Activated naive CD4-positive, alpha-beta T cell treated with anti-CD3 and anti-CD28 coated beads for 36 hours (primary cell): ENCODE measurements at regions of chr3 and their contacts with region 1.

Region 1: DNA sequence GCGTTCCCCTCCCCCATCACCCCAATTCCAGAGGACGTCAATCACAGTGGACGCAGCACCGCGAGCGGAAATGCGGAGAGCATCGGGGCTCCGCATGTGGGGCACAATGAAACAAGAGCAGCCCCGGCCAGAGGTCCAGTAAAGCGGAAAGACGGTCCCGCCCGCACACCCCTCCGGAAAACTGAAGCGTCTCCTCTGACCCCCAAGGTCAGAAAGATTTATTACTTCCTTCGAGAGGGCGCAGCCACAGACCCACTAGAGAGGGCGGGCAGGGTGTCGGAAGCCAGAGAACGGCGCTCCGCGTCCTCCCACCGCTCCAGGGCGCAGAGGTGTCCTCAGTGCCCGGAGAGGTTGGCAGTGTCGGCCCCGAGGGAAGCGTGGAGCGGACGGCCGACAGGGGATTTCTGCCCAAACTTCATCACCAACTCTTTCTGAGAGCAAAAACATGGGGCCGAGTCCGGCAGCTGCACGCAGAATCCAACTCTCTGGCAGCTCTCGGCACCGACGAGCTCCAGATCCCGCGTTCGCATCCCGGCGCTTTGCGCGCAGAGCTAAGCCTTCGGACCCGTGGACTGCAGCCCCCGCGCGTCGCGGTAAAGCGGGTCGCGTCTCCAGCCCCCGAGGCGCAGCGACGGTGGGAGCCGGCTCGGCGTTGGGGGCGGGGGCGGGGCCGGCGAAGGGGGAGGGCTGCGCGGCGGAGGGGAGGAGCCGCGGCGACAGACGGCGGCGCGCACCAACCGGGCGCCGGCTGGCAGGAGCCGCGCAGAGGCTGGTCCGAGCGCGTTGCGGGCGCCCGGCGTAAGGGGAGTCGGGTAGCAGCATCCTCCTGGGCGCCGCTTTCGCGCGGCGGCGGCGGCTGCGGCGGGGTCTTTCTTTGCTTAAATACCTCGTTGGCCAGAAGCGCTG is at the start of gene CHST2:
- DNase-seq: peak; percentile 76
- H3K4me3 Mint-ChIP-seq: peak within 1 kb of the TSS; percentile 84
- H3K27ac Mint-ChIP-seq: no peak within 1 kb of the TSS
- H3K4me1 Mint-ChIP-seq: peaks cover 31% of the 10 kb centered on the region
- H3K27me3 Mint-ChIP-seq: no peaks in the 10 kb centered on the region
- total RNA-seq, gene CHST2: 4.2 to 4.4 TPM

Region 2: GRCh38 chr3:143001369-143002082 is 117.7 kb before region 1 on chr3 and contains the start of gene U2SURP:
- CTCF ChIA-PET with region 1: no interaction called
- intact Hi-C with region 1: loop called (anchors 1 kb)
- DNase-seq: peak; percentile 95
- H3K4me3 Mint-ChIP-seq: peak within 1 kb of the TSS; percentile 96
- H3K27ac Mint-ChIP-seq: peak within 1 kb of the TSS; percentile 96
- H3K4me1 Mint-ChIP-seq: peaks cover 31% of the 10 kb centered on the region
- H3K27me3 Mint-ChIP-seq: no peaks in the 10 kb centered on the region
- total RNA-seq, gene U2SURP: 173 to 180 TPM

Region 3: DNA sequence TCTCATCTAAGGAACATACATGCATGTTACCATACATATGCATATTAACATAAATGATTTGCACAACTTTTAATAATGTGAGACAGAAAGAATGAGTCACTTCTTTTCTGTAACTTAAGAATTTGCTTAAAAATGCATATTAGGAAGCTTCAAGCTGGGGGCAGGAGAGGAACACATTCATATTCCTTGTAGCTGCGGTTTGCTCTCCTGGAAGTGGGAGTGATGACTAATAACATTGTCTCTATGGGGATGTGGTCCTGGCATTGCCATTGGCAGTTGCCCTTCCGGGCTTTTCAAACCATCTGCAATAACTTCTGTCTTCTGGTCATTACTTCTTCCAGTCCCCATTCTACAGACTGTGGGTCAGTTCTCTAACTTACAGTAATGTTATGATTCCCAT is 15.9 kb after region 1 on chr3:
- CTCF ChIA-PET with region 1: interaction called, 11 read pairs
- intact Hi-C with region 1: no loop called
- DNase-seq: no peak
- H3K4me3 Mint-ChIP-seq: no peak overlapping the region
- H3K27ac Mint-ChIP-seq: no peak overlapping the region
- H3K4me1 Mint-ChIP-seq: peaks cover 13% of the 10 kb centered on the region
- H3K27me3 Mint-ChIP-seq: no peaks in the 10 kb centered on the region

Region 4: DNA sequence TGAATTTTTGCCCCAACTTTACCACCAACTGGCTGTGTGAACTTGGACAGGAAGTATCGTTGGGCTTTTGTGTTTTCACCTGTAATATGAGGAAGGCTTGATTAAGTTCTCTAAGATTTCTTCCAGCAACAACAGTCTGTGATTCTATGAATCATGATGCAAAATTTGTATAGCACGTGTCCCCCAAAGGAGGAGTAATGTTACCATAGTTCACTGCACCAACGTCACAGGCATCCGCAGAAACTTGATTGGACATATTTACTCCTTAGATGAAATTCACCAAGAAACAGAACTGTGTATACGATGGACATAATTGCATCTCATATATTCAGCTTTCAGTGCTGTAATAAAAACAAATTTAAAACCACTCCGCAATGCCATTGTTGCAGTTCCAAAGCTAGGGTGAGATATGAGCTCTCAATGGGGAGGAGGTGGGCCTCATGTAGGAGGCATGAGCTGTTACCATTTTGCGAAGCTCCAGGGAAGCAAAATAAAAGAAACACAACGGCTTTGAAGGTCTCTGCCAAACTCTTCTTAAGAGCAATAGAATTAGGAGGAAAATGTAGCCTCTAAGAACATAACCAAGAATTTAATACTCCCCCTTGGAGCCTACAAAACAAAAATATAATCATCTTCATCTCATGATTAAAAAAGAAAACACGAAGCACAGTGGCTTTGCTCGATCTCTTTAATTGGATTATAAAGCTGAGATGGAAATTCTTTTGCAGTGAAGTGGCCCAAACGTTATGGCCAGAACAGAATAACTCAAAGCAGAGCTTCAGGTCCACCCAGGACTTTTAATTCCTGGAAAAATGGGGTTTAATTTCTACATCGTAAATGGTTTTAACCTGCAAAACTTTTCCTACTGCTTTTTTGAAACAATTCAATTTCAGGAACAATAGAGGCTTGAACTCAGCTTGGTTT is 81.0 kb after region 1 on chr3:
- CTCF ChIA-PET with region 1: no interaction called
- intact Hi-C with region 1: no loop called
- DNase-seq: no peak
- H3K4me3 Mint-ChIP-seq: no peak overlapping the region
- H3K27ac Mint-ChIP-seq: no peak overlapping the region
- H3K4me1 Mint-ChIP-seq: no peaks in the 10 kb centered on the region
- H3K27me3 Mint-ChIP-seq: no peaks in the 10 kb centered on the region

Region 5: GRCh38 chr3:143326983-143327778 is 207.9 kb after region 1 on chr3:
- CTCF ChIA-PET with region 1: no interaction called
- intact Hi-C with region 1: loop called (anchors 2 kb)
- DNase-seq: no peak
- H3K4me3 Mint-ChIP-seq: no peak overlapping the region
- H3K27ac Mint-ChIP-seq: no peak overlapping the region
- H3K4me1 Mint-ChIP-seq: peaks cover 12% of the 10 kb centered on the region
- H3K27me3 Mint-ChIP-seq: no peaks in the 10 kb centered on the region

Region 6: DNA sequence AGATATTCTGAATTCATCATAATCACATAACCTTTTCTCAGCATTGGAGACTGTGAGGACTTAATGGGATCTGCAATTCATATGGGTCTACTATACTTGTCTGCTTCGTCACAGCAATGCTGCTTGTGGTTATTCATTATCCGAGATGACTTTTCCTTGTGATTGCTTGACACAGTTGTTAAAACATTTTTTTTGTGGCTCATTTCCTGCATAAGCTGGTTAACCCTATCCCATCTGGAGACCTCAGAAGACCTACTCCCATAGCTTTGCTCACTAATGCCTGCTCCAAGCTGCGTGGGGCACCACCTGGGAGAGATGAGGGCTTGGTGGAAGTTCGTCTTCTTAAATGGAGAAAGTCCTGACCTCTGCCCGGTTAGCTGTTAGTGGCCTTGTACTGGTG is 361.1 kb after region 1 on chr3:
- CTCF ChIA-PET with region 1: no interaction called
- intact Hi-C with region 1: no loop called
- DNase-seq: no peak
- H3K4me3 Mint-ChIP-seq: no peak overlapping the region
- H3K27ac Mint-ChIP-seq: no peak overlapping the region
- H3K4me1 Mint-ChIP-seq: no peaks in the 10 kb centered on the region
- H3K27me3 Mint-ChIP-seq: no peaks in the 10 kb centered on the region

Region 7: GRCh38 chr3:143535994-143536784 is 416.9 kb after region 1 on chr3:
- CTCF ChIA-PET with region 1: no interaction called
- intact Hi-C with region 1: loop called (anchors 5 kb)
- DNase-seq: no peak
- H3K4me3 Mint-ChIP-seq: no peak overlapping the region
- H3K27ac Mint-ChIP-seq: no peak overlapping the region
- H3K4me1 Mint-ChIP-seq: peaks cover 21% of the 10 kb centered on the region
- H3K27me3 Mint-ChIP-seq: no peaks in the 10 kb centered on the region

Region 8: GRCh38 chr3:143763564-143764162 is 644.4 kb after region 1 on chr3:
- CTCF ChIA-PET with region 1: no interaction called
- intact Hi-C with region 1: loop called (anchors 2 kb)
- DNase-seq: no peak
- H3K4me3 Mint-ChIP-seq: no peak overlapping the region
- H3K27ac Mint-ChIP-seq: no peak overlapping the region
- H3K4me1 Mint-ChIP-seq: peaks cover 21% of the 10 kb centered on the region
- H3K27me3 Mint-ChIP-seq: no peaks in the 10 kb centered on the region